Ascending aorta (tissue), 2 donors: ENCODE measurements at regions of chr17 and their contacts with region 1.

Region 1: DNA sequence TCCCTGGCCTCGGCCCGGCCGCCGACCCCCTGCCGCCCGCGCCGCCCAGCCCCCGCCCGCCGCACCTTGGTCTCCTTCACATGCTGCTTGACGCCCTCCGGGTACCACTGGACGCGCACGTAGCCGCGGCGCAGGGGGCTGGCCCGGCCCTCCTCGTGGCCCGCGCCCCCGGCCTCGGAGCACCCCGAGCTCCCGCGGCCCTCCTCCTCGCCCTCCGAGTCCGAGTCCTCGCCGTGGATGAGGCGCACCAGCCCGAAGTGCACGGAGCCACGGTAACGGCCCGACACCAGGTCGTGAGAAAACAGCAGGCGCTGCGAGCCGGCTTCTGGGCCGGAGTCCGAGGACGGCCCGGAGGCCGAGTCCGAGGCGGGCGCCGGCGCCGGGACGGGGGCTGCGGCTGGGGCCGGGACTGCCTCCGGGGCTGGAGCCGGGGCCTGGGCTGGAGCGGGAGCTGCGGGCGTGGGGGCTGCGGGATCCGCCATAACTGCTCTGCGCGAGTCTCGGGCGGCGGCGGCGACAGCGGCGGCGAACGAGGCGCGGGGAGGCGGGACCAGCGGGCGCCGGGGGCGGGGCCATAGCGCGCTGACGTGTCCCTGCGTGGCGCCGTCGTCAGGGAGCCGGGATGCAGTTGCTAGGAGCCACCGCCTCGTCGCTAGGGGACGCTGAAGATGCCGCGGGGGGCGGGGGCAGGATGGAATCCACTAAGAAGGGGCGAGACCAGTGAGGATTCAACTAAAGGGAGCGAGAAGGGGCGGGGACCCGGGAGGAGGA is at the start of gene UBE2O:
- DNase-seq: peak; percentile 42 to 92
- H3K4me3 ChIP-seq: peak within 1 kb of the TSS; percentile 94 to 98
- H3K27ac ChIP-seq: peak within 1 kb of the TSS; percentile 67 to 77
- H3K4me1 ChIP-seq: peaks cover 0 to 8% of the 10 kb centered on the region in 2 donors
- H3K27me3 ChIP-seq: no peaks in the 10 kb centered on the region
- CTCF ChIP-seq: peak; percentile 35 to 55 (median 48)
- total RNA-seq, gene UBE2O: 19.6 TPM

Region 2: DNA sequence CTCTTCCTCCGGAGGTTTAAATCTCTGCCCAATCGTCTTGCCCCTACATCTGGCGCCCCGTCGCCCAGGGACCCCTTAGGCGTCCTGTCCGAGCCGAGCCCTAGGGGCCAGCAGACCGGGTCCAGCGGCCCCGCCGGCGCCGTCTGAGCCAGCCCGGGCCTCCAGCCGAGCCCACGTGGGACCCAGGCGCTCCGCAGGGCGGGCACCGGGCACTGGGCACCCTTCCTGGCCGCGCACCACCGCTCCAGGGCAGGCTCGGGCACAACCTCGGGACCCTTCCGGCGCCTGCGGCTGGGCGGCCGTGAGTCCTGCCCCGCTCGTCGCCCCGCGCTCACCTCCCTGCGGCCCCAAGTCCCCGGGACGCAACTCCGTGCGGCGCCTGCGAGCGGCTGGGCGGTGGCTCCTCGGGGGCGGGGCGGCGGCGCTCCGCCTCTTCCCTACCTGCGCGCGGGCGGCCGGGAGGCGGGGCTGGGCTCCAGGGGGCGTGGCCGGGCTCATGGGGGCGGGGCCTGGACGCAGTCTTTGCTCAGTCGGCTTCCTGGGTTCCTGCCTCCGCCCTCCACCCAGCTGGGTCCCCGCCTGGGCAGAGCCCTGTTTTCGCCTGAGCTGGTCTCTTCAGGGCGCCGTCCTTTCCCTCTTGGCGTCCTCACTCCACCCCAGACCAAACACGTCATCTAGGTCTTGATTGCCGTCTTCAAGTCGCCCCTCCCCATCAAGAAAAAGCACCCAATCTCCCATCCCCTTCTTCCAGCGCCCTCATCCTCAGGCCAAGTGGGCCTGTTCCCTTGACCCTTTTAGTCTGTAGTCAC is 48.4 kb after region 1 on chr17 and contains the start of gene RHBDF2:
- intact Hi-C with region 1: loop called (anchors 5 kb)
- DNase-seq: peak; percentile 77 to 93
- H3K4me3 ChIP-seq: peak within 1 kb of the TSS; percentile 62 to 78
- H3K27ac ChIP-seq: peak within 1 kb of the TSS; percentile 80
- H3K4me1 ChIP-seq: peaks cover 10 to 38% of the 10 kb centered on the region in 2 donors
- H3K27me3 ChIP-seq: no peaks in the 10 kb centered on the region
- CTCF ChIP-seq: no peak
- total RNA-seq, gene RHBDF2: 12.7 TPM